B cell (primary cell): ENCODE measurements at regions of chr4 and their contacts with region 1.

Region 1: GRCh38 chr4:25015012-25015411 is 15.7 kb downstream of the LGI2 start:
- DNase-seq: no peak
- ATAC-seq: no peak
- H3K4me3 ChIP-seq: no peak overlapping the region
- H3K4me3 Mint-ChIP-seq: no peak overlapping the region
- H3K27ac ChIP-seq: no peak overlapping the region
- H3K27ac Mint-ChIP-seq: no peak overlapping the region
- H3K4me1 ChIP-seq: no peaks in the 10 kb centered on the region
- H3K4me1 Mint-ChIP-seq: no peaks in the 10 kb centered on the region
- H3K27me3 ChIP-seq: peaks cover 0 to 4% (median 0%) of the 10 kb centered on the region in 4 experiments
- H3K27me3 Mint-ChIP-seq: peaks cover 12% of the 10 kb centered on the region
- CTCF ChIP-seq: no peak

Region 2: DNA sequence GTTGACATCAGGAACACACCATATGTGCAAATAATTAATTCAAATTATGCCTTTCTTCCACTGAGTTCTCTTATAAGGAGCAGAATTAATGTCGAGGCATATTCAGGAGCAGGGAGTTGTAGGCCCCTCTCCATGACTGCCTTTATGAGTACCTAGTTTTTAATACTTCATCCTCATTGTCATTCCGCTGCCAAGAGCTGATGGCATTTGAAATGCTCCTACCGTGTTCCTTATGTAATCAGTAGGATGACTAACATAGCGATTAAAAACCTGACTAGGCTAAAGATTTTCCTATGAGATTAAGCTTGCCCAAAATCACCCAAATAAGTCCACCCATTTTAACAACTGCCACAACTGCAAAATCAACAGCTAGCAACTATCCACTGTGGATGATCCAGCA is 651.3 kb before region 1 on chr4:
- CTCF ChIA-PET with region 1: no interaction called
- POLR2A ChIA-PET with region 1: no interaction called
- intact Hi-C with region 1: loop called (anchors 5 kb)
- DNase-seq: no peak
- ATAC-seq: no peak
- H3K4me3 ChIP-seq: no peak overlapping the region
- H3K4me3 Mint-ChIP-seq: no peak overlapping the region
- H3K27ac ChIP-seq: no peak overlapping the region
- H3K27ac Mint-ChIP-seq: no peak overlapping the region
- H3K4me1 ChIP-seq: no peaks in the 10 kb centered on the region
- H3K4me1 Mint-ChIP-seq: no peaks in the 10 kb centered on the region
- H3K27me3 ChIP-seq: no peaks in the 10 kb centered on the region
- H3K27me3 Mint-ChIP-seq: no peaks in the 10 kb centered on the region
- CTCF ChIP-seq: no peak

Region 3: DNA sequence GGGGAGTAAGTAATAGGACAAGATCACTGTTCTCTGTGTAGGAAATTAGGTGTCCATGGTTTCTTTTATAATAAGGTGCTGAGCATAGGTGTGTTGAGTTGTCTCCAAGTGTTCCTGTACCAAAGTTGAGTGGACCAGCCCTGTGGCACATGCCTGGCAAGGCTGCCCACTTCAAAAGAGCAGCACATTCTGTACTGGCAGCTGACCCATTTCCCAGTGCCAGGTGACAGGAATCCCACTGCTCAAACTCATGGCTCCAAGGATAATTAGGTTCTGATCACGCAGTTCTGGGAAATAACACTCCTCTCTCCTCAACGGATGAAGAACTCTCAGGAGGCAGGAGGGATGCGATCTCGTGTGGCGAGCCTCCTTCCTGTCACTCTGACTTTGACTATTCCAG is 28.5 kb after region 1 on chr4:
- CTCF ChIA-PET with region 1: no interaction called
- POLR2A ChIA-PET with region 1: no interaction called
- intact Hi-C with region 1: no loop called
- DNase-seq: no peak
- ATAC-seq: no peak
- H3K4me3 ChIP-seq: no peak overlapping the region
- H3K4me3 Mint-ChIP-seq: no peak overlapping the region
- H3K27ac ChIP-seq: no peak overlapping the region
- H3K27ac Mint-ChIP-seq: no peak overlapping the region
- H3K4me1 ChIP-seq: no peaks in the 10 kb centered on the region
- H3K4me1 Mint-ChIP-seq: no peaks in the 10 kb centered on the region
- H3K27me3 ChIP-seq: peaks cover 0 to 3% (median 0%) of the 10 kb centered on the region in 4 experiments
- H3K27me3 Mint-ChIP-seq: peaks cover 16% of the 10 kb centered on the region
- CTCF ChIP-seq: no peak